ENCODE measurements at regions of chr1 and their contacts with region 1.

Region 1: GRCh38 chr1:212665241-212666115 is 34.2 kb downstream of the BATF3 start:
- DNase-seq: peak; percentile 88
- H3K4me3 Mint-ChIP-seq: peak overlapping the region; percentile 73
- H3K27ac Mint-ChIP-seq: peak overlapping the region; percentile 57
- H3K4me1 Mint-ChIP-seq: peaks cover 19% of the 10 kb centered on the region
- H3K27me3 Mint-ChIP-seq: peaks cover 3% of the 10 kb centered on the region

Region 2: GRCh38 chr1:212721388-212722247 is 56.1 kb after region 1 on chr1:
- CTCF ChIA-PET with region 1: interaction called, 12 read pairs
- POLR2A ChIA-PET with region 1: interaction called, 5 read pairs
- intact Hi-C with region 1: no loop called
- DNase-seq: peak; percentile 77
- H3K4me3 Mint-ChIP-seq: peak overlapping the region; percentile 63
- H3K27ac Mint-ChIP-seq: peak overlapping the region; percentile 94
- H3K4me1 Mint-ChIP-seq: peaks cover 58% of the 10 kb centered on the region
- H3K27me3 Mint-ChIP-seq: peaks cover 3% of the 10 kb centered on the region

Region 3: GRCh38 chr1:212760126-212760823 is 94.8 kb after region 1 on chr1:
- CTCF ChIA-PET with region 1: interaction called, 15 read pairs
- POLR2A ChIA-PET with region 1: no interaction called
- intact Hi-C with region 1: loop called (anchors 1 kb)
- DNase-seq: peak; percentile 77
- H3K4me3 Mint-ChIP-seq: no peak overlapping the region
- H3K27ac Mint-ChIP-seq: no peak overlapping the region
- H3K4me1 Mint-ChIP-seq: peaks cover 28% of the 10 kb centered on the region
- H3K27me3 Mint-ChIP-seq: no peaks in the 10 kb centered on the region

Region 4: DNA sequence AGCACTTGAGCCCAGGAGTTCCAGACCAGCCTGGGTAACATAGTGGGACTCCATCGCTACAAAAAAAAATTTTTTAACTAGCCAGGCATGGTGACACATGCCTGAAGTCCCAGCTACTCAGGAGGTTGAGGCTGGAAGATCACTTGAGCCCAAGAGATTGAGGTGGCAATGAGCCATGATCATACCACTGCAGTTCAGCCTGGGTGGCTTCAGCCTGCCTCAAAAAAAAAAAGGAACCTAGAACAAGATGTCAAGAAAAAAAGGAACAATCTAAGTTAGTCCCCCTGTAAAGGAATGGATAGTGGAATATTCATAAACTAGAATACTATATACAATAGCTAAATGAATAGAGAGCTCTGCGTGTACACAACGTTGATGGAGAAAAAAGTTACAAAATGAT is 111.7 kb after region 1 on chr1:
- CTCF ChIA-PET with region 1: interaction called, 156 read pairs
- POLR2A ChIA-PET with region 1: no interaction called
- intact Hi-C with region 1: loop called (anchors 1 kb)
- DNase-seq: no peak
- H3K4me3 Mint-ChIP-seq: no peak overlapping the region
- H3K27ac Mint-ChIP-seq: no peak overlapping the region
- H3K4me1 Mint-ChIP-seq: peaks cover 28% of the 10 kb centered on the region
- H3K27me3 Mint-ChIP-seq: no peaks in the 10 kb centered on the region

Region 5: GRCh38 chr1:212791676-212792395 is 126.4 kb after region 1 on chr1 and contains the starts of genes NSL1 and TATDN3:
- CTCF ChIA-PET with region 1: interaction called, 156 read pairs
- POLR2A ChIA-PET with region 1: no interaction called
- intact Hi-C with region 1: no loop called
- DNase-seq: peak; percentile 97
- H3K4me3 Mint-ChIP-seq: peak within 1 kb of the TSS; percentile 95
- H3K27ac Mint-ChIP-seq: peak within 1 kb of the TSS; percentile 82
- H3K4me1 Mint-ChIP-seq: peaks cover 32% of the 10 kb centered on the region
- H3K27me3 Mint-ChIP-seq: no peaks in the 10 kb centered on the region
- total RNA-seq, gene NSL1: 39.8 to 41.8 TPM
- total RNA-seq, gene TATDN3: 19.2 to 20.7 TPM

Region 6: DNA sequence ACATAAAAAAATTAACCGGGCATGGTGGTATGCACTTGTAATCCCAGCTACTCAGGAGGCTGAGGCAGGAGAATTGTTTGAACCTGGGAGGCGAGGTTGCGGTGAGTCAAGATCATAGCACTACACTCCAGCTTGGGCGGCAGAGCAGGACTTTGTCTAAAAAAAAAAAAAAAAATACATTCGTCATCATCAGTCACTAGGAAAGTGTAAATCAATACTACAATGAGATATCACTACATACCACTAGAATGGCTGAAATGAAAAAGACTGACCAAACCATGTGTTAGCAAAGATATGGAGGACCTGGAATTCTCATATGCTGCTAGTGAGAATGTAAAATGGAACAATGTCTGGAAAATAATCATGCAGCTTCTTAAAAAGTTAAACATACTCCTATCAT is 172.7 kb after region 1 on chr1:
- CTCF ChIA-PET with region 1: no interaction called
- POLR2A ChIA-PET with region 1: no interaction called
- intact Hi-C with region 1: no loop called
- DNase-seq: no peak
- H3K4me3 Mint-ChIP-seq: no peak overlapping the region
- H3K27ac Mint-ChIP-seq: no peak overlapping the region
- H3K4me1 Mint-ChIP-seq: peaks cover 7% of the 10 kb centered on the region
- H3K27me3 Mint-ChIP-seq: no peaks in the 10 kb centered on the region

Measured in activated CD4-positive, alpha-beta memory T cell treated with anti-CD3 and anti-CD28 coated beads for 36 hours (primary cell).